CD4-positive, alpha-beta T cell (primary cell): ENCODE measurements at regions of chr12 and their contacts with region 1.

Region 1: GRCh38 chr12:49945394-49946080 is 5.0 kb upstream of the AQP2 start:
- DNase-seq: peak; percentile 63 to 91 (median 78)
- ATAC-seq: peak; percentile 95
- H3K4me3 ChIP-seq: peak overlapping the region; percentile 47
- H3K4me3 Mint-ChIP-seq: peak overlapping the region; percentile 83
- H3K27ac ChIP-seq: peak overlapping the region in 1 of 2 donors; percentile 35
- H3K27ac Mint-ChIP-seq: peak overlapping the region; percentile 86
- H3K4me1 ChIP-seq: peaks cover 40% of the 10 kb centered on the region
- H3K4me1 Mint-ChIP-seq: peaks cover 30% of the 10 kb centered on the region
- H3K27me3 ChIP-seq: no peaks in the 10 kb centered on the region
- H3K27me3 Mint-ChIP-seq: peaks cover 5% of the 10 kb centered on the region
- CTCF ChIP-seq: peak; percentile 89

Region 2: GRCh38 chr12:49932533-49933130 is 12.9 kb before region 1 on chr12:
- CTCF ChIA-PET with region 1: interaction called, 11 read pairs
- POLR2A ChIA-PET with region 1: interaction called, 4 read pairs
- intact Hi-C with region 1: no loop called
- DNase-seq: no peak
- ATAC-seq: no peak
- H3K4me3 ChIP-seq: no peak overlapping the region
- H3K4me3 Mint-ChIP-seq: no peak overlapping the region
- H3K27ac ChIP-seq: no peak overlapping the region
- H3K27ac Mint-ChIP-seq: no peak overlapping the region
- H3K4me1 ChIP-seq: no peaks in the 10 kb centered on the region
- H3K4me1 Mint-ChIP-seq: no peaks in the 10 kb centered on the region
- H3K27me3 ChIP-seq: peaks cover 0 to 5% of the 10 kb centered on the region in 2 experiments
- H3K27me3 Mint-ChIP-seq: no peaks in the 10 kb centered on the region
- CTCF ChIP-seq: no peak

Region 3: DNA sequence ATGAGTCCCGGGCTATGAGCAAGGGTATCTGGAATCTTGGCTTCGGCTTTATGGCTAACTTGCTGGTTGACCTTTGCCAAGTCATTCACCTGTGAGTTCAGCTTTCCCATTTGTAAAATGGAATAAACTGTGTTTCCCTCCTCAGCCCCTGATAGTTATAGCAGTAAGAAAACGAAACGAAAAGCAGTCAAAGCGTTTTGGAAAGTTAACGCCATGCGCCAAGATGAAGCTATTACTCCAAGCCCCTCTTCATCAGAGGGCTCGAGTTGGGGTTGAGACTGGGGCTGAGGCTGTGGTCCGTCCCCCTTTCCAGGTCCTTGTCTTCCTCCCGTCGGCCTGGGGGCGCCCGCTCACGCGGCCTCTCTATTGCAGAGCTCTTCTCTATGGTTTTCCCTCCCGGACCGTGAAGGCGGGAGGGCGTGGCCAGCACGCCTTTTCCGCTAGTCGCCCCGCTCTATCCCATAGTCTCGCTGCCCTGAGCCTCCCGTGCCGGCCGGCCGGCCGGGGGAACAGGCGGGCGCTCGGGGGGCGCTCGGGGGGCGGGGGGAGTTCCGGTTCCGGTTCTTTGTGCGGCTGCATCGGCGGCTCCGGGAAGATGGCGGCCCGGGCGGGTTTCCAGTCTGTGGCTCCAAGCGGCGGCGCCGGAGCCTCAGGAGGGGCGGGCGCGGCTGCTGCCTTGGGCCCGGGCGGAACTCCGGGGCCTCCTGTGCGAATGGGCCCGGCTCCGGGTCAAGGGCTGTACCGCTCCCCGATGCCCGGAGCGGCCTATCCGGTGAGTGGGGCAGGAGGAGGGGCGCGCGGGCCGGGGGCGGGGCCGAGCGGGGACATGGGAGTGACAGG is 139.5 kb after region 1 on chr12 and contains the start of gene SMARCD1:
- CTCF ChIA-PET with region 1: no interaction called
- POLR2A ChIA-PET with region 1: no interaction called
- intact Hi-C with region 1: no loop called
- DNase-seq: peak; percentile 70 to 93 (median 84)
- ATAC-seq: peak; percentile 83
- H3K4me3 ChIP-seq: peak within 1 kb of the TSS; percentile 95
- H3K4me3 Mint-ChIP-seq: peak within 1 kb of the TSS; percentile 96
- H3K27ac ChIP-seq: peak within 1 kb of the TSS; percentile 82 to 95
- H3K27ac Mint-ChIP-seq: peak within 1 kb of the TSS; percentile 99
- H3K4me1 ChIP-seq: peaks cover 21% of the 10 kb centered on the region
- H3K4me1 Mint-ChIP-seq: peaks cover 43% of the 10 kb centered on the region
- H3K27me3 ChIP-seq: no peaks in the 10 kb centered on the region
- H3K27me3 Mint-ChIP-seq: no peaks in the 10 kb centered on the region
- CTCF ChIP-seq: peak; percentile 45
- total RNA-seq, gene SMARCD1: 78.9 to 80.0 TPM

Region 4: GRCh38 chr12:50572271-50572670 is 626.7 kb after region 1 on chr12:
- CTCF ChIA-PET with region 1: no interaction called
- POLR2A ChIA-PET with region 1: no interaction called
- intact Hi-C with region 1: no loop called
- DNase-seq: peak in 3 of 14 experiments; percentile 8 to 35 (median 34)
- ATAC-seq: no peak
- H3K4me3 ChIP-seq: no peak overlapping the region
- H3K4me3 Mint-ChIP-seq: no peak overlapping the region
- H3K27ac ChIP-seq: no peak overlapping the region
- H3K27ac Mint-ChIP-seq: peak overlapping the region; percentile 8
- H3K4me1 ChIP-seq: peaks cover 7% of the 10 kb centered on the region
- H3K4me1 Mint-ChIP-seq: peaks cover 57% of the 10 kb centered on the region
- H3K27me3 ChIP-seq: no peaks in the 10 kb centered on the region
- H3K27me3 Mint-ChIP-seq: no peaks in the 10 kb centered on the region
- CTCF ChIP-seq: no peak